ENCODE measurements at regions of chr13 and their contacts with region 1.

Region 1: DNA sequence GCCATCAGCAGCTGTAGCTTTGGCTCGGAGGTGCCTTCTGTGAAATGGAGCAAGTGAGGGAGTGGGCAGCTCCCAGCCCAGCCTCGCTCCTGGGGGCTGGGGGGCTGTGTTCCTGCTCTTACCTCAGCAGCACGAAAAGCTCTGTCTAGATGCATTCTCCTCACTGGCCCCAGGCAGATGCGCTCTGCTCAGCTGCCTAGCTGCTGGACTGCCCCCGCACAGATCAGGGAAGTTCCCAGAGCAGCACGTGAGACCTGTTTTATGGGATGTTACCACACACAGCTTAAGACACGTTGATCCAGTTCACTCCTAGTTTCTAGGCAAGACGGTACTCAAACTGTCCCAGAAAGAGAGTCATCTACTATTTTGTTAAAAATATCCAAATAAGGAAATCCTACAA is 13.6 kb downstream of the LCP1 start:
- DNase-seq: peak; percentile 89
- H3K4me3 Mint-ChIP-seq: peak overlapping the region; percentile 67
- H3K27ac Mint-ChIP-seq: peak overlapping the region; percentile 94
- H3K4me1 Mint-ChIP-seq: peaks cover 92% of the 10 kb centered on the region
- H3K27me3 Mint-ChIP-seq: no peaks in the 10 kb centered on the region

Region 2: DNA sequence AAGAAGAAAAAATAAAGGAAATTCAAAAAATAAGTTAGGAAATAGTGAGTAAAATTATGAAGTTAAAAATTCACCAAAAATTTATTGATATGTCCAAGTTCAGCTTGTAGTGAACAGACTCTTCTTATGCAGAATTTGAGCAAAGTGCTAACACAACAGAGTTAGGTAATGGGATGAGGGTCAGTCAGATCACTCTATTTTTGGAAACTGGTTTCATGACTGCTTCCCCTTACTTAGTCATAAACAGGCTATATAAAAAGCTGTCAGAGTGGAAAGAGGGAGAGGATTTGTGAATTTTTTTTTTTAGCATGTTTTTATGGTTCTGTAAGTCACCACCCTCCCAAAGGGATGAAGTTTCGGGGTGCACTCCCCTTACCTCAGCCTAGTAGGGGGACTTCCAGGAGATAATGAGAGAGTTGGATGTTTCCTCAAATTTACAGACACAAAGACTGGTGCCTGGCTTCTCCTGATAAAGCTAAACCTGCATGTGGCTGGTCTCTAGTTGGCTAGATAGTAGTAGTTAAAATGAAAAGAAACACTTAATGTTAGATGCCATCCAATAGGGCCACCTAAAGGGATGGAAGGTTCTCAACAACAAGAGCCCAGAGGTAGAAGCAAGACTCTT is 68.0 kb before region 1 on chr13:
- CTCF ChIA-PET with region 1: no interaction called
- intact Hi-C with region 1: no loop called
- DNase-seq: no peak
- H3K4me3 Mint-ChIP-seq: no peak overlapping the region
- H3K27ac Mint-ChIP-seq: no peak overlapping the region
- H3K4me1 Mint-ChIP-seq: no peaks in the 10 kb centered on the region
- H3K27me3 Mint-ChIP-seq: no peaks in the 10 kb centered on the region

Region 3: DNA sequence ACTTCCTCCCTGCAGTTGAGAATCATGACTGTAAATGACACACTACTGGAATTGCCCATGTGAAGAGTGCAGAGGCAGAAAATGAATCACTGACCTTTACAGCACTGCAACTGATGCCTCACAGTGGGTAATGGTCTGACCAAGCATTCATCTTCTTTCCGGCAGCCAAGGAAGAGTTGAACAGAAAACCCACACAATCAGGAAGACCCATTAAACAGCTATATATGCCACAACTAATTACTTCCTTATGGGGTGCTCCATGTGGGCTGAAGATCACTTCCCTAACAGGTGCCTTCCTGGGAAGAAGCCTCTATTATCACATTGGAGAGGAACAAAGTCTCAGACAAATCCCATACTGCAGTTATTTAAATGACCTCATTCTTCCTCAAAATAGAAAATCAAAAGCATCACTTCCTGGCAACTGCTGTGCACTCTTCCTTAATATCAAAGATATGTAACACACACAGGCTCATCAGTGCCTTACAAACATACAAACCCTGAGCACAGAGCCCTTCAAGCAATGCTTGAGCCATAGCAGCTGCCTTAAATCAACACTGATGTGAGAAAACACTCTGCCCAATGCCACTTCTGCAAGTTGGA is 172.9 kb after region 1 on chr13:
- CTCF ChIA-PET with region 1: no interaction called
- intact Hi-C with region 1: loop called (anchors 1 kb)
- DNase-seq: peak; percentile 78
- H3K4me3 Mint-ChIP-seq: peak overlapping the region; percentile 63
- H3K27ac Mint-ChIP-seq: peak overlapping the region; percentile 92
- H3K4me1 Mint-ChIP-seq: peaks cover 52% of the 10 kb centered on the region
- H3K27me3 Mint-ChIP-seq: no peaks in the 10 kb centered on the region

Region 4: GRCh38 chr13:46804391-46804815 is 636.1 kb after region 1 on chr13:
- CTCF ChIA-PET with region 1: no interaction called
- intact Hi-C with region 1: no loop called
- DNase-seq: no peak
- H3K4me3 Mint-ChIP-seq: no peak overlapping the region
- H3K27ac Mint-ChIP-seq: no peak overlapping the region
- H3K4me1 Mint-ChIP-seq: no peaks in the 10 kb centered on the region
- H3K27me3 Mint-ChIP-seq: no peaks in the 10 kb centered on the region

Measured in activated naive CD4-positive, alpha-beta T cell treated with anti-CD3 and anti-CD28 coated beads for 36 hours (primary cell).